ENCODE measurements at regions of chr2 and their contacts with region 1.

Region 1: GRCh38 chr2:37376421-37377186 is 32.2 kb downstream of the QPCT start:
- DNase-seq: peak; percentile 20
- H3K4me3 Mint-ChIP-seq: peak overlapping the region; percentile 24
- H3K27ac Mint-ChIP-seq: peak overlapping the region; percentile 73
- H3K4me1 Mint-ChIP-seq: peaks cover 29% of the 10 kb centered on the region
- H3K27me3 Mint-ChIP-seq: peaks cover 44% of the 10 kb centered on the region

Region 2: GRCh38 chr2:37231241-37232130 is 145.1 kb before region 1 on chr2 and contains the starts of genes CEBPZ and NDUFAF7:
- intact Hi-C with region 1: loop called (anchors 1 kb)
- DNase-seq: peak; percentile 81
- H3K4me3 Mint-ChIP-seq: no peak within 1 kb of the TSS
- H3K27ac Mint-ChIP-seq: no peak within 1 kb of the TSS
- H3K4me1 Mint-ChIP-seq: peaks cover 24% of the 10 kb centered on the region
- H3K27me3 Mint-ChIP-seq: no peaks in the 10 kb centered on the region
- total RNA-seq, gene CEBPZ: 59.3 and 61.8 TPM in 2 replicates
- total RNA-seq, gene NDUFAF7: 19.8 and 21.2 TPM in 2 replicates

Region 3: GRCh38 chr2:37365669-37366068 is 10.9 kb before region 1 on chr2:
- intact Hi-C with region 1: loop called (anchors 1 kb)
- DNase-seq: no peak
- H3K4me3 Mint-ChIP-seq: no peak overlapping the region
- H3K27ac Mint-ChIP-seq: no peak overlapping the region
- H3K4me1 Mint-ChIP-seq: peaks cover 24% of the 10 kb centered on the region
- H3K27me3 Mint-ChIP-seq: peaks cover 33% of the 10 kb centered on the region

Region 4: GRCh38 chr2:37623971-37624900 is 247.6 kb after region 1 on chr2:
- intact Hi-C with region 1: loop called (anchors 10 kb)
- DNase-seq: no peak
- H3K4me3 Mint-ChIP-seq: no peak overlapping the region
- H3K27ac Mint-ChIP-seq: peak overlapping the region; percentile 30
- H3K4me1 Mint-ChIP-seq: peaks cover 42% of the 10 kb centered on the region
- H3K27me3 Mint-ChIP-seq: no peaks in the 10 kb centered on the region

Region 5: DNA sequence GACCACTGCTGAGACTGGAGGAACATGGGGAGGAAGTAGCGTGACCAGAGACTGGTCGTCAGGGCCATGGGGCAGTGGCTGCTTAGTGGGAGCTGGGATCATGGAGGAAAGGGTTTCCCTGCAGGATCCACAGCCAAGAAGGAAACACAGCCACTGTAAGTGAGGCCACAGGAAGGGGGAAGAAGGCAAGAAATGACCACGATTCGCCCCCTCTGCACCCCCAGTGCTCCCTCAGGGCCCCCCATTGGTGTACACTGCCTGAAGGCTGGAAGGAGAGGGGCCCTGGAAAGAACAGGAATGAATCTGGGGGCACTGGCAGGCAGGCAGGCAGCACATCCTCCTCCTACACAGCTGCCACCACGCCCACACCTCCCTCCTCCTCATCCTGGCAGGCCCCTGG is 486.0 kb after region 1 on chr2:
- intact Hi-C with region 1: no loop called
- DNase-seq: no peak
- H3K4me3 Mint-ChIP-seq: no peak overlapping the region
- H3K27ac Mint-ChIP-seq: no peak overlapping the region
- H3K4me1 Mint-ChIP-seq: peaks cover 3% of the 10 kb centered on the region
- H3K27me3 Mint-ChIP-seq: peaks cover 33% of the 10 kb centered on the region

Region 6: DNA sequence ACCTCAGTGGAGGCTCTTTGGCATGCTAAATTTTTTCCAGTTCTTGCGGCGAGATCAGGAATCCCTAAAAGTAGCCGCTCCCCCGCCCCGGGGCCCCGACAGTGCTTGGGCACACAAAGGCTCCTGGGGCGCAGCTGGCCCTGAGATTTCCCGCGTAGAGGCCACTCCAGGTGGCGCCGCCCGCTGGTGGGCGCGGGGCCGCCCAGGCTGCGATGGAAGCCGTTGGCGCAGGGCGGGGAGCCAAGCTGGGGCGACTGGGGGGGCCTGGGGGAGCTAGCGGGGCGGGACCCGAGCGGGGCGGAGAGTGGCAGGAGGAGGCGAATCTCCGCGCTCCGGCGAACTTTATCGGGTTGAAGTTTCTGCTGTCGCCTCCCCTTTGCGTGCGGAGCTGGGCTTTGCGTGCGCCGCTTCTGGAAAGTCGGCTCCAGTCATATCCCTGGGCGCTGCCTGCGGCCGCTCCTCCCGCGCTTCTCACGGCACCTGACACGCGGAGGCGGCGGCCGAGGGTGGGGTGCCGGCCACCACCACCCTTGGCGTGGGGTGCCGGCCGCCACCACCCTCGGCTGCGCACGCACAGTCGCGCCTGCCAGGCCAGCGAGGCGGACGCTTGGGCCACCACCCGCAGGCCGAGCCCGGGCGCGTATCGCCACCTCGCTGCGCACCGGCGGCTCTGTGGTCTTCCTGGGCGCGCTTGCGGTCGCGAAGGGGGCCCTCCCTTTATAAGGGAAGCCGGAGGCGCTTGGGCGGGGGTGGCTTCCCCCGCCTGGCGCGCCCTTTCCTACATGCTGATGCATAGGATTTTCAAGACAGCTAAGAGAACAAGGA is 700.2 kb after region 1 on chr2:
- intact Hi-C with region 1: loop called (anchors 5 kb)
- DNase-seq: peak; percentile 81
- H3K4me3 Mint-ChIP-seq: peak overlapping the region; percentile 84
- H3K27ac Mint-ChIP-seq: peak overlapping the region; percentile 85
- H3K4me1 Mint-ChIP-seq: peaks cover 45% of the 10 kb centered on the region
- H3K27me3 Mint-ChIP-seq: peaks cover 43% of the 10 kb centered on the region

Region 7: DNA sequence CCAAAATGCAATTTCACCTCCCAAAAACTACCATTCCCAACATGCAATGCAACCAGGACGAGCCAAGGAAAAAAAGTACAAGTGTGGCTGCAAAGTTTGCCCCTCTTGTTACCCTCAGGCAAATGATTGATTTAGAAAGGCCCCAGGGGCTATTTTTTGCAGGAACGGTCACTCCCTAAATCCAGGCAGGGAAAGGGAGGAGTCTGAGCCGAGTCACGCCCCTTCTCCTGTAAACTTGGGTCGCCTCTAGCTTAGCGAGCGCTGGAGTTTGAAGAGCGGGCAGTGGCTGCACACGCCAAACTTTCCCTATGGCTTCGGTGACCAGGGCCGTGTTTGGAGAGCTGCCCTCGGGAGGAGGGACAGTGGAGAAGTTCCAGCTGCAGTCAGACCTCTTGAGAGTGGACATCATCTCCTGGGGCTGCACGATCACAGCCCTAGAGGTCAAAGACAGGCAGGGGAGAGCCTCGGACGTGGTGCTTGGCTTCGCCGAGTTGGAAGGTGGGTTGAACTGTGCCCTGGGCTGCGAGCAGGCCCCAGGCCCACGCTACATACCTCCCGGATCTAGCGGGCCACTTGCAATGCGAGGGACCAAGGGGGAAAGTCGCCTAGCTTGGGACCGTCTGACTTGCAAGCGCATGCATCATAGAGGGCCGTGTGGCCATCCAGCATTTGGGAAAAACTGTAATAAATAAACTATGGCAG is 1289.4 kb after region 1 on chr2 and contains the start of gene GALM:
- intact Hi-C with region 1: loop called (anchors 10 kb)
- DNase-seq: peak; percentile 51
- H3K4me3 Mint-ChIP-seq: peak within 1 kb of the TSS; percentile 88
- H3K27ac Mint-ChIP-seq: peak within 1 kb of the TSS; percentile 96
- H3K4me1 Mint-ChIP-seq: peaks cover 64% of the 10 kb centered on the region
- H3K27me3 Mint-ChIP-seq: no peaks in the 10 kb centered on the region
- total RNA-seq, gene GALM: 42.1 and 43.0 TPM in 2 replicates